CD14-positive monocyte (primary cell): ENCODE measurements at regions of chr12 and their contacts with region 1.

Region 1: DNA sequence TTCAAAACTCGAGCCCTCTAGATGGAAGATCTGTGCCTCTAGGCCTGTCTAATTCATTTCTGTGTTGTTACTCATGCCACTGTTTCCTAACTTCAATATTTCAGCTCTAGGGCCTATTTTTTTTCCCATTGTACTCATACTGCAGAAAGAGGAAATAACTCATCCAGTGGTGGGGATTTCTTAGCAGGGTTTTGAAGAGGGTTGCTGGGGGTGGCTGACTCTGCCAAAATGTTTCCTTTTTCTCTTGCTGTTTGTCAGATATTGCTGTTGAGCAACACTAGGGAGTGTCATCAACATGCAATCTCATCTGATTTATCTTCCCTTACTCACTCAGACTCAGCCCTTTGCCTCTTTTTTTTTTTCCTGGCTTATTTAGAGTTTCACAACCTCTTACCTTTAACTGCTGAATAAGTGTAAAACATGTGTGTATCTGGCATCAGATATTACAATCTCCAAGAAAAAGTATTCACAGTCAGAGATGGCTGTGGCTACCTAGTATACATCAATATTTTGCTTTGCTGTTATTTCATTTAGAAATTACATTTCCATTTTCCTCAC is 189.5 kb downstream of the DUSP6 start:
- DNase-seq: peak; percentile 98 to 100 (median 99)
- H3K4me3 ChIP-seq: no peak overlapping the region
- H3K4me3 Mint-ChIP-seq: no peak overlapping the region
- H3K27ac ChIP-seq: peak overlapping the region; percentile 85 to 99
- H3K27ac Mint-ChIP-seq: no peak overlapping the region
- H3K4me1 ChIP-seq: peaks cover 88 to 95% of the 10 kb centered on the region in 2 donors
- H3K4me1 Mint-ChIP-seq: peaks cover 27% of the 10 kb centered on the region
- H3K27me3 ChIP-seq: no peaks in the 10 kb centered on the region
- H3K27me3 Mint-ChIP-seq: no peaks in the 10 kb centered on the region
- CTCF ChIP-seq: no peak

Region 2: DNA sequence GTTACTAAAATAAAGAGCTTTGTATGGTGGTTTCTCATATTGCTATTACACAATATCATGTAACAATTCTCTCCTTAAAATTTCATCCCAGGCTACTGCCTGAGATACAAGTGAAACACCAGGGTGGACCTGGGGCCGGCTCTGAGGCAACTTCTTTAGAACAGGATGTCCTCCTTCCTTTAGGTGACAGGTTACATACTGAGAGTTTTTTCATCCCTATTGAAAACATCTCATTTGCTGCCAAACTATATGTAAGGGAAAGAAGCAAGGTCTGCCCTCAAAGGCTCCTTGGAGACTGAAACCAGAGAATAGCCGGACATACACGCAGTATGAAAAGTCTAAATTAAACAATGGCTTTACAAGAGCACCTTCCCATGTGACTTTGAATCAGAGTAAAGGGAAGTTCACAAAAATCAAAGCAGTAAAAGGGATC is 49.6 kb after region 1 on chr12:
- intact Hi-C with region 1: loop called in 1 of 2 experiments (anchors 10 kb)
- DNase-seq: peak in 2 of 3 donors; percentile 37 to 45
- H3K4me3 ChIP-seq: no peak overlapping the region
- H3K4me3 Mint-ChIP-seq: no peak overlapping the region
- H3K27ac ChIP-seq: peak overlapping the region in 1 of 2 donors; percentile 34
- H3K27ac Mint-ChIP-seq: peak overlapping the region in 5 of 7 donors; percentile 28 to 78 (median 54)
- H3K4me1 ChIP-seq: peaks cover 47 to 57% of the 10 kb centered on the region in 2 donors
- H3K4me1 Mint-ChIP-seq: peaks cover 51% of the 10 kb centered on the region
- H3K27me3 ChIP-seq: no peaks in the 10 kb centered on the region
- H3K27me3 Mint-ChIP-seq: no peaks in the 10 kb centered on the region
- CTCF ChIP-seq: no peak

Region 3: GRCh38 chr12:89244536-89244935 is 81.8 kb after region 1 on chr12:
- intact Hi-C with region 1: loop called in 1 of 2 experiments (anchors 5 kb)
- DNase-seq: peak; percentile 84 to 95 (median 90)
- H3K4me3 ChIP-seq: peak overlapping the region in 1 of 3 experiments; percentile 45
- H3K4me3 Mint-ChIP-seq: peak overlapping the region; percentile 20 to 61
- H3K27ac ChIP-seq: peak overlapping the region; percentile 14 to 93
- H3K27ac Mint-ChIP-seq: peak overlapping the region; percentile 86 to 95 (median 91)
- H3K4me1 ChIP-seq: peaks cover 32 to 33% of the 10 kb centered on the region in 2 donors
- H3K4me1 Mint-ChIP-seq: peaks cover 38% of the 10 kb centered on the region
- H3K27me3 ChIP-seq: no peaks in the 10 kb centered on the region
- H3K27me3 Mint-ChIP-seq: no peaks in the 10 kb centered on the region
- CTCF ChIP-seq: no peak

Region 4: GRCh38 chr12:89267404-89267803 is 104.6 kb after region 1 on chr12:
- intact Hi-C with region 1: loop called (anchors 5 to 10 kb)
- DNase-seq: peak in 1 of 3 donors; percentile 4
- H3K4me3 ChIP-seq: no peak overlapping the region
- H3K4me3 Mint-ChIP-seq: no peak overlapping the region
- H3K27ac ChIP-seq: peak overlapping the region in 1 of 2 donors; percentile 27
- H3K27ac Mint-ChIP-seq: peak overlapping the region; percentile 79 to 91 (median 88)
- H3K4me1 ChIP-seq: peaks cover 26 to 42% of the 10 kb centered on the region in 2 donors
- H3K4me1 Mint-ChIP-seq: peaks cover 35% of the 10 kb centered on the region
- H3K27me3 ChIP-seq: no peaks in the 10 kb centered on the region
- H3K27me3 Mint-ChIP-seq: peaks cover 0 to 4% (median 0%) of the 10 kb centered on the region in 3 donors
- CTCF ChIP-seq: no peak